ENCODE measurements at regions of chr12 and their contacts with region 1.

Region 1: GRCh38 chr12:124369055-124369900 is 74.4 kb downstream of the RFLNA start:
- DNase-seq: no peak
- ATAC-seq: peak; percentile 25
- H3K4me3 ChIP-seq: no peak overlapping the region
- H3K4me3 Mint-ChIP-seq: no peak overlapping the region
- H3K27ac ChIP-seq: no peak overlapping the region
- H3K27ac Mint-ChIP-seq: peak overlapping the region in 1 of 9 donors; percentile 24
- H3K4me1 ChIP-seq: no peaks in the 10 kb centered on the region
- H3K4me1 Mint-ChIP-seq: peaks cover 0 to 4% (median 0%) of the 10 kb centered on the region in 7 donors
- H3K27me3 ChIP-seq: no peaks in the 10 kb centered on the region
- H3K27me3 Mint-ChIP-seq: no peaks in the 10 kb centered on the region

Region 2: GRCh38 chr12:124217508-124218237 is 151.6 kb before region 1 on chr12:
- CTCF ChIA-PET with region 1: no interaction called
- POLR2A ChIA-PET with region 1: no interaction called
- intact Hi-C with region 1: no loop called
- DNase-seq: no peak
- ATAC-seq: no peak
- H3K4me3 ChIP-seq: no peak overlapping the region
- H3K4me3 Mint-ChIP-seq: peak overlapping the region in 2 of 10 donors; percentile 12 to 39
- H3K27ac ChIP-seq: no peak overlapping the region
- H3K27ac Mint-ChIP-seq: no peak overlapping the region
- H3K4me1 ChIP-seq: no peaks in the 10 kb centered on the region
- H3K4me1 Mint-ChIP-seq: peaks cover 0 to 8% (median 2%) of the 10 kb centered on the region in 7 donors
- H3K27me3 ChIP-seq: no peaks in the 10 kb centered on the region
- H3K27me3 Mint-ChIP-seq: peaks cover 0 to 28% (median 10%) of the 10 kb centered on the region in 5 donors

Region 3: GRCh38 chr12:124347716-124348357 is 21.4 kb before region 1 on chr12:
- CTCF ChIA-PET with region 1: interaction called, 13 read pairs
- POLR2A ChIA-PET with region 1: no interaction called
- intact Hi-C with region 1: no loop called
- DNase-seq: peak in 6 of 9 donors; percentile 5 to 43 (median 24)
- ATAC-seq: no peak
- H3K4me3 ChIP-seq: no peak overlapping the region
- H3K4me3 Mint-ChIP-seq: no peak overlapping the region
- H3K27ac ChIP-seq: no peak overlapping the region
- H3K27ac Mint-ChIP-seq: no peak overlapping the region
- H3K4me1 ChIP-seq: no peaks in the 10 kb centered on the region
- H3K4me1 Mint-ChIP-seq: no peaks in the 10 kb centered on the region
- H3K27me3 ChIP-seq: no peaks in the 10 kb centered on the region
- H3K27me3 Mint-ChIP-seq: no peaks in the 10 kb centered on the region

Region 4: GRCh38 chr12:124391340-124392261 is 22.3 kb after region 1 on chr12:
- CTCF ChIA-PET with region 1: no interaction called
- POLR2A ChIA-PET with region 1: no interaction called
- intact Hi-C with region 1: no loop called
- DNase-seq: peak in 8 of 9 donors; percentile 30 to 52 (median 47)
- ATAC-seq: peak; percentile 51
- H3K4me3 ChIP-seq: no peak overlapping the region
- H3K4me3 Mint-ChIP-seq: peak overlapping the region; percentile 35 to 86 (median 71)
- H3K27ac ChIP-seq: peak overlapping the region; percentile 50
- H3K27ac Mint-ChIP-seq: peak overlapping the region; percentile 58 to 93 (median 87)
- H3K4me1 ChIP-seq: peaks cover 4 to 20% of the 10 kb centered on the region in 2 donors
- H3K4me1 Mint-ChIP-seq: peaks cover 23 to 45% (median 38%) of the 10 kb centered on the region in 7 donors
- H3K27me3 ChIP-seq: no peaks in the 10 kb centered on the region
- H3K27me3 Mint-ChIP-seq: no peaks in the 10 kb centered on the region

Region 5: GRCh38 chr12:124588751-124589267 is 219.5 kb after region 1 on chr12:
- CTCF ChIA-PET with region 1: no interaction called
- POLR2A ChIA-PET with region 1: no interaction called
- intact Hi-C with region 1: no loop called
- DNase-seq: no peak
- ATAC-seq: peak; percentile 60
- H3K4me3 ChIP-seq: no peak overlapping the region
- H3K4me3 Mint-ChIP-seq: no peak overlapping the region
- H3K27ac ChIP-seq: no peak overlapping the region
- H3K27ac Mint-ChIP-seq: peak overlapping the region in 1 of 9 donors; percentile 28
- H3K4me1 ChIP-seq: peaks cover 0 to 8% of the 10 kb centered on the region in 2 donors
- H3K4me1 Mint-ChIP-seq: peaks cover 10 to 14% (median 13%) of the 10 kb centered on the region in 7 donors
- H3K27me3 ChIP-seq: no peaks in the 10 kb centered on the region
- H3K27me3 Mint-ChIP-seq: peaks cover 0 to 14% (median 3%) of the 10 kb centered on the region in 5 donors

Measured in naive thymus-derived CD4-positive, alpha-beta T cell (primary cell).